ENCODE measurements at regions of chr2 and their contacts with region 1.

Region 1: GRCh38 chr2:46315103-46315890 is 18.1 kb downstream of the EPAS1 start:
- DNase-seq: peak; percentile 95
- ATAC-seq: peak; percentile 92
- H3K4me3 ChIP-seq: no peak overlapping the region
- H3K27ac ChIP-seq: peak overlapping the region; percentile 68 to 71
- H3K4me1 ChIP-seq: peaks cover 7 to 14% of the 10 kb centered on the region in 2 donors
- H3K27me3 ChIP-seq: no peaks in the 10 kb centered on the region

Region 2: GRCh38 chr2:45964226-45964845 is 351.0 kb before region 1 on chr2:
- intact Hi-C with region 1: no loop called
- DNase-seq: peak; percentile 80 to 93
- ATAC-seq: peak; percentile 42
- H3K4me3 ChIP-seq: no peak overlapping the region
- H3K27ac ChIP-seq: no peak overlapping the region
- H3K4me1 ChIP-seq: peaks cover 3 to 4% of the 10 kb centered on the region in 2 donors
- H3K27me3 ChIP-seq: no peaks in the 10 kb centered on the region

Region 3: GRCh38 chr2:46335391-46336282 is 20.3 kb after region 1 on chr2:
- intact Hi-C with region 1: loop called (anchors 1 to 2 kb)
- DNase-seq: peak; percentile 67 to 84
- ATAC-seq: peak; percentile 33
- H3K4me3 ChIP-seq: no peak overlapping the region
- H3K27ac ChIP-seq: peak overlapping the region; percentile 92 to 95
- H3K4me1 ChIP-seq: peaks cover 10 to 19% of the 10 kb centered on the region in 2 donors
- H3K27me3 ChIP-seq: no peaks in the 10 kb centered on the region